Activated CD4-positive, alpha-beta T cell treated with anti-CD3 and anti-CD28 coated beads for 36 hours (primary cell): ENCODE measurements at regions of chr11 and their contacts with region 1.

Region 1: DNA sequence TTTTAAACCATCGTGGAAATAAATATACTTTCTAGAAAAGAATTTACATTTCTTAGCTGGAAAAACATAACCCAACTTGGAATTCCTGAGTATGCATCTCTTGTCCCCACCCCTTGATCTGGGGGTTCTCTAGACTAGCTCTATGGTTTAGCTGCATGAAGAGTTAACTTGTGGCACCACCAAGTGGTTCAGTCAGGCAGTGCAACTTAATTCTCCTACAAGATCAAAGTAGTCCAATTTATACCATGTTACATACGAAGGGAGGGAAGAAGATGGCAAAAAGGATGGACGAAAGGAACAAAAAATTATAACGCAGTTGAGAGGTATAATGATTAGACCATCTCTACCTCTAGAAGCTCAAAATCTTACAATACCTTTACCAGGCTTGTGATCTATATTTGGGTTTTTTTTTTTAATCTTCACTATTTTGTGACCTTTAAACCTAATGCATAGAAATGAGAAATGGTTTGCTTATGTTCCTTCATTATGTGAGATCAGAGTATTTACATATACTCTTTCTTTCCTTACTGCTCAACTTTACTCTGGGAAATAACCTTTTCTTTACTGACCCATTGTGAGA is 28.5 kb upstream of the ALKBH3 start:
- DNase-seq: peak; percentile 76
- ATAC-seq: peak; percentile 71
- H3K4me3 Mint-ChIP-seq: no peak overlapping the region
- H3K27ac Mint-ChIP-seq: no peak overlapping the region
- H3K4me1 Mint-ChIP-seq: peaks cover 2% of the 10 kb centered on the region
- H3K27me3 Mint-ChIP-seq: no peaks in the 10 kb centered on the region

Region 2: GRCh38 chr11:43504316-43504950 is 347.7 kb before region 1 on chr11:
- CTCF ChIA-PET with region 1: interaction called, 13 read pairs
- POLR2A ChIA-PET with region 1: no interaction called
- intact Hi-C with region 1: no loop called
- DNase-seq: peak; percentile 23
- ATAC-seq: no peak
- H3K4me3 Mint-ChIP-seq: no peak overlapping the region
- H3K27ac Mint-ChIP-seq: no peak overlapping the region
- H3K4me1 Mint-ChIP-seq: peaks cover 8% of the 10 kb centered on the region
- H3K27me3 Mint-ChIP-seq: peaks cover 6% of the 10 kb centered on the region

Region 3: DNA sequence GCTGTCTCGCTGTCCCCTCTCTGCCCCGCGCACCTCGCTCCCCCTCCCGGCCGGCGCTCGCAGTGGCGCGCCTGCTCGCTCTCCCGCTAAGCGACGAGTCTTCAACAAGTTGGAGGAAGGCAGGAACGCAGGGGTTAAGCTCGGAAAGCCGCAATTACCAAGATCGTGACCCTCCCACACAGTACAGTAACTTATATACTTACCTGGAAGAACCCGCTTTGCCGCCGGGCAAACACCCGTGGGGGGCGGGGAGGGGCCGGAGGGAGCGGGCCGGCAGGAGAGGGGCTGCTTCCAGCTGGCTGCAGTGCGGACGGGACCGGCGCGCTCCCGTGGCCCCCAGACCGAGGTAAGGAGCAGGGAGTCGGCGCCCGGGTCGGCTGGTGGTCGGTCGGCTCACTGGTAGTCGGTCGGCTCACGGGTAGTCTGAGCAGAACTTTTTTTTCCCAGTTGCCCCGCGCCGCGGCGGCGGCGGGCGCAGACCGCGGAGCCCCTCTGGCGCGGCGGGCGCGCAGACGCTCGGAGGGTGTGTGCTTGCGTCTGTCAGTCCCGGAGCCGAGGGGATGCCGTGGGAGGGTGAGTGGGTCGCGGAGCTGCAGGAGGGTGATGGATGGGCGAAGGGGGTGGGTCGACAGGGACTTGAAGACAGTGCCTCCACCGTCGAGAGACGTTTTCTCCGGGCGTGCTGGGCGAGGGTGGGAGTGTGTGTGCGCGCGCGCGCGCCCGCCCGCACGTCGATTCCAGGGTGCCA is 272.8 kb before region 1 on chr11:
- CTCF ChIA-PET with region 1: interaction called, 8 read pairs
- POLR2A ChIA-PET with region 1: no interaction called
- intact Hi-C with region 1: loop called (anchors 5 kb)
- DNase-seq: peak; percentile 76
- ATAC-seq: peak; percentile 65
- H3K4me3 Mint-ChIP-seq: peak overlapping the region; percentile 47
- H3K27ac Mint-ChIP-seq: no peak overlapping the region
- H3K4me1 Mint-ChIP-seq: peaks cover 43% of the 10 kb centered on the region
- H3K27me3 Mint-ChIP-seq: peaks cover 84% of the 10 kb centered on the region

Region 4: DNA sequence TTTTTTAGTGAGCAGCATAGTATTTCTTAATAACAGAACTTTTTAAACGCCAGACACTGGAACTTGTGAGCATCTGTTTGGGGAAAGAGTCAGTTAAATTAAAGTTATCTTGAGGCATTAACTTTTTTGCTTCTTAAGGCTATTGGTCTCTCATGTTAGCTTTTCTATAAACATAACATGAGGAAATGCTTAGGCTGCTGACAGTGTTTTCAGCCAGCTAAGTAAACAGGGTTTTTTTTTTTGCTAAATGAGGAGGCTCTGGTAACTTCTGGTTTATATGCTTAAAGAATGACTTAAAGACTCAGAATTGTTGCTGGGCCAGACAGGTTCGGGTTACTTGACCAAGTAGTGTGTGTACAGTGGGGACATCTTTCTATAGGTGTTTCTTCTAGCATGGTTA is 67.3 kb before region 1 on chr11:
- CTCF ChIA-PET with region 1: no interaction called
- POLR2A ChIA-PET with region 1: no interaction called
- intact Hi-C with region 1: no loop called
- DNase-seq: no peak
- ATAC-seq: no peak
- H3K4me3 Mint-ChIP-seq: no peak overlapping the region
- H3K27ac Mint-ChIP-seq: no peak overlapping the region
- H3K4me1 Mint-ChIP-seq: no peaks in the 10 kb centered on the region
- H3K27me3 Mint-ChIP-seq: no peaks in the 10 kb centered on the region

Region 5: GRCh38 chr11:43825217-43825816 is 26.8 kb before region 1 on chr11:
- CTCF ChIA-PET with region 1: interaction called, 32 read pairs
- POLR2A ChIA-PET with region 1: no interaction called
- intact Hi-C with region 1: loop called (anchors 1 kb)
- DNase-seq: peak; percentile 21
- ATAC-seq: no peak
- H3K4me3 Mint-ChIP-seq: no peak overlapping the region
- H3K27ac Mint-ChIP-seq: no peak overlapping the region
- H3K4me1 Mint-ChIP-seq: peaks cover 2% of the 10 kb centered on the region
- H3K27me3 Mint-ChIP-seq: no peaks in the 10 kb centered on the region

Region 6: GRCh38 chr11:43830928-43831440 is 21.2 kb before region 1 on chr11:
- CTCF ChIA-PET with region 1: interaction called, 32 read pairs
- POLR2A ChIA-PET with region 1: no interaction called
- intact Hi-C with region 1: loop called in 1 of 2 experiments (anchors 2 kb)
- DNase-seq: peak; percentile 81
- ATAC-seq: peak; percentile 99
- H3K4me3 Mint-ChIP-seq: no peak overlapping the region
- H3K27ac Mint-ChIP-seq: peak overlapping the region; percentile 73
- H3K4me1 Mint-ChIP-seq: peaks cover 24% of the 10 kb centered on the region
- H3K27me3 Mint-ChIP-seq: no peaks in the 10 kb centered on the region

Region 7: DNA sequence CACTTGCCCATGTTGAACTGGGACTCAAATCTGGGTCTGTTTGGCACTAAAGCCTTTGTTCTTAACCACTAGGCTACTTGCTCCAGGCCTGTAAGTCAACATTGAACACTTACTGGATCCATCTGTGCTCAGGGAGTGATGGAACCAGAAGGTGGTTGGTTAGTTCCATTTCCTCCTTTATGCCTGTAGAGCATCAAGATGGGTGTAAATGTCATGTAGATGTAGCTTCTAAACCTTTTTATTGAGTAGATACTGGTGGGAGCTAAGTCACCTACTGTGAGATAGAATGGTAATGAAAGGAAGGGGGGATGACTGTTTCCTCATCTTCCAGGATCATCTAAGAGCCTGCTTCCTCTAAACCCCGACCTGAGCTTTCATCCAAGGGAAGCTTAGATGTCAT is 10.1 kb before region 1 on chr11:
- CTCF ChIA-PET with region 1: interaction called, 18 read pairs
- POLR2A ChIA-PET with region 1: no interaction called
- intact Hi-C with region 1: no loop called
- DNase-seq: no peak
- ATAC-seq: no peak
- H3K4me3 Mint-ChIP-seq: no peak overlapping the region
- H3K27ac Mint-ChIP-seq: no peak overlapping the region
- H3K4me1 Mint-ChIP-seq: no peaks in the 10 kb centered on the region
- H3K27me3 Mint-ChIP-seq: no peaks in the 10 kb centered on the region

Region 8: DNA sequence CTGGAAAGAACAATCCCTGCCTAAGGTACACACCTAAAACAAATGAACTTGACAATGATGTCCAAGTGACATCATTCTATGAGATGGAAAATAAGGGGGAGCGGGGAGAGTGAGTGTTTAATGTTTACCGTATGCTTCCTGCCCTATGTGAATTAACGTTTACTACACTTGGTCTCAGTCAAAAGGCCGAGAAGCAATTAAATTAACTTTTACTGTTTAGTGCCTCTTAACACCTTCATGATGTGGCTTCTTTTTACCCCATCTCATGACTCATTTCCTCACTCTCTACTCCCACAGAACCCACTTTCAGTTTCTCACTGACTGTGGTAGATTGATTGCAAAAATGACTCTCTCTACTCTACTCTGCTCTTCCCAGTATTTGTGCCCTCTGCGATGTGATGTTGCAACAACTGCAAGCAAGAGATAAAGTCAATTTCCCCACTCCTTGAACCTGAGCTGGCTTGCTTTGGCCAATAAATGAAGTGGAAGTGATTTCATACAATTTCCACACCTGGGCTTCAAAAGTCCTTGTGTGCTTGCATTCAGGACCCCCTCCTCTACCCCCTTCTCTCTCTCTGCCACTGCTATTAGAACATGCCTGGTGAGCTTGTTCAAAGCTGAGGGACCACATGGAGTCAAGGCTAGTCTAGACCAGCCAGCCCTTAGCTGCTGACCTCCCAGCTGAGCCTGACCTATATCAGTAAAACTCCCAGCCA is 16.9 kb after region 1 on chr11:
- CTCF ChIA-PET with region 1: interaction called, 15 read pairs
- POLR2A ChIA-PET with region 1: no interaction called
- intact Hi-C with region 1: no loop called
- DNase-seq: peak; percentile 58
- ATAC-seq: peak; percentile 97
- H3K4me3 Mint-ChIP-seq: peak overlapping the region; percentile 7
- H3K27ac Mint-ChIP-seq: peak overlapping the region; percentile 8
- H3K4me1 Mint-ChIP-seq: peaks cover 21% of the 10 kb centered on the region
- H3K27me3 Mint-ChIP-seq: peaks cover 45% of the 10 kb centered on the region

Region 9: GRCh38 chr11:44351006-44351660 is 499.0 kb after region 1 on chr11:
- CTCF ChIA-PET with region 1: no interaction called
- POLR2A ChIA-PET with region 1: no interaction called
- intact Hi-C with region 1: no loop called
- DNase-seq: no peak
- ATAC-seq: no peak
- H3K4me3 Mint-ChIP-seq: no peak overlapping the region
- H3K27ac Mint-ChIP-seq: no peak overlapping the region
- H3K4me1 Mint-ChIP-seq: no peaks in the 10 kb centered on the region
- H3K27me3 Mint-ChIP-seq: peaks cover 19% of the 10 kb centered on the region